A549 (cell line): ENCODE measurements at regions of chr1 and their contacts with region 1.

Region 1: DNA sequence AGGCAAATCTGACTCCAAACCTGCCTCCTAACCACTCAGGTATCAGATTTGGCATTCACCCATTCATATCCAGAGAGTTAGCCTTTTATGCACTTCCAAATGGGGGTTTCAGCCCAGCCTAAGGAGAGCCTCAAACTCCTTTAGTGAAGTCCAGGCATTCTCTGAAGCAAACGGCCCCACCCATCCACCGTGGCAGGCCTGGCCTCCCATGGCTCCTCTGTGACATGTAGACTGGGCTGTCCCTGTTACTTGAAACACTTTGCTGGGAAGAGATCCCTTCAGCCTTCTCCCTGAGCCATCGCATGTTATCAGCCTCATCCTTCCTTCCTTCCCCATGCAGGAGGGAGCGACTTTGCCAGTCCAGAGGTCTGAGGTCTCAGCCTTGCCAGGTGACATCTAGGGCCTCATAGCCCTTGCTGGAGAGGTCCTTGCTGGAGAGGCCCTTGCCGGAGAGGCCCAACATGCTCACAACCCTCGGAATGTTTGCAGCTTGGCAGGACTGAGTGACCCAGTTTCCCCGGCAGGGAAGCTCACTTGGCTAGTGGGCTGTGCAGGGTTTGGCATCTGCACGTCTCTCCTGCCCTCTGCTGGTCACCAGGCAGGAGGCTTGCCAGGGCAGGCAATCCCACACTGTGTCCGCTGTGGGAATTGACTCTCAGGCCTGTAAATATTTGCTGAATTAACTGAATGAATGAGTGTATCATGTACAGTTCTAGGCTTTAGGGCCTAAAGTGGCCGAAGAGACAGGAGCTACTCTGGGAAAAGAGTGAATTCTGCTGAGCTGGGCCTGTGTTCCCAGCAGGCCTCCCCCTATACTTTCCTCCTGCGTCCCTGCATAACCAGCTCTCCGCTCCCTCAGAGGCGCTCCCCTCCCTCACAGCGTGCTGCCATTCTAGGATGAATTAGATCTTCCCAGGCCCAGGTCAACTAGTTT is 26.7 kb upstream of the RBM15 start:
- DNase-seq: peak; percentile 42 to 69
- ATAC-seq: peak; percentile 97 to 100
- H3K4me3 ChIP-seq: no peak overlapping the region
- H3K27ac ChIP-seq: no peak overlapping the region
- H3K4me1 ChIP-seq: no peaks in the 10 kb centered on the region
- CTCF ChIP-seq: peak; percentile 82
- EP300 ChIP-seq: no peak
- POLR2A ChIP-seq: no peak
- RAD21 ChIP-seq: peak; percentile 95

Region 2: GRCh38 chr1:110203021-110203661 is 109.3 kb before region 1 on chr1:
- CTCF ChIA-PET with region 1: interaction called, 354 read pairs
- POLR2A ChIA-PET with region 1: no interaction called
- DNase-seq: peak; percentile 40 to 63
- ATAC-seq: peak; percentile 60 to 83; a peak in 4 of 6 replicates
- H3K4me3 ChIP-seq: no peak overlapping the region
- H3K27ac ChIP-seq: peak overlapping the region in 1 of 2 experiments; percentile 32; a peak in 2 of 6 replicates
- H3K4me1 ChIP-seq: peaks cover 11% of the 10 kb centered on the region
- CTCF ChIP-seq: peak; percentile 77
- EP300 ChIP-seq: no peak
- POLR2A ChIP-seq: no peak
- RAD21 ChIP-seq: peak; percentile 78 to 86

Region 3: GRCh38 chr1:110254996-110255787 is 57.3 kb before region 1 on chr1:
- CTCF ChIA-PET with region 1: interaction called, 13 read pairs
- POLR2A ChIA-PET with region 1: no interaction called
- DNase-seq: no peak
- ATAC-seq: no peak
- H3K4me3 ChIP-seq: no peak overlapping the region
- H3K27ac ChIP-seq: no peak overlapping the region
- H3K4me1 ChIP-seq: no peaks in the 10 kb centered on the region
- CTCF ChIP-seq: no peak
- EP300 ChIP-seq: no peak
- POLR2A ChIP-seq: no peak
- RAD21 ChIP-seq: no peak

Region 4: GRCh38 chr1:110328274-110328673 is 15.8 kb after region 1 on chr1:
- CTCF ChIA-PET with region 1: interaction called, 15 read pairs
- POLR2A ChIA-PET with region 1: no interaction called
- DNase-seq: no peak
- ATAC-seq: no peak
- H3K4me3 ChIP-seq: no peak overlapping the region
- H3K27ac ChIP-seq: no peak overlapping the region
- H3K4me1 ChIP-seq: peaks cover 18% of the 10 kb centered on the region
- CTCF ChIP-seq: no peak
- EP300 ChIP-seq: no peak
- POLR2A ChIP-seq: no peak
- RAD21 ChIP-seq: no peak

Region 5: DNA sequence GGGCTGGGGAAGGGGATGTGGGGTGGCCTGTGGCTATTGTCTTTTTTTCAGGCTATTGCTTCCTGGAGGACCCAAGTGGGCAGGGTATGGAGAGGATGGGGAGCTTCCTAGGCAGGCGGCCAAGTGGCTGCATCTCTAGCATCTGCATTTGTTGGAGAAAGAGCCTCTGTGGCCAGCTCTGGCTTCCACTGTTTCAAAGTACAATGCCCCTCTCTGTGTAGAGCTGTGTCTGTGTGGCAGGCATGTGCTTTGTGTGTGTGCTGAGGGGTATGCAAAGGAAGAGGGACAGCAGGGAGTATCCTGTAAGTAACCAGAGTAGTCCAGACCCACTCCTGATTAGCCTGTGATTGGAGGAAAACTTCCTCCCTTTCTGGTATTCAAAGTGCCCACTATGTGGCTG is 253.1 kb after region 1 on chr1:
- CTCF ChIA-PET with region 1: no interaction called
- POLR2A ChIA-PET with region 1: no interaction called
- DNase-seq: no peak
- ATAC-seq: no peak
- H3K4me3 ChIP-seq: no peak overlapping the region
- H3K27ac ChIP-seq: no peak overlapping the region
- H3K4me1 ChIP-seq: no peaks in the 10 kb centered on the region
- CTCF ChIP-seq: no peak
- EP300 ChIP-seq: no peak
- POLR2A ChIP-seq: no peak
- RAD21 ChIP-seq: no peak